H1 (cell line): ENCODE measurements at regions of chr1 and their contacts with region 1.

Region 1: GRCh38 chr1:9399510-9400424 is 107.1 kb downstream of the SPSB1 start:
- DNase-seq: no peak
- H3K4me3 ChIP-seq: no peak overlapping the region
- H3K27ac ChIP-seq: no peak overlapping the region
- H3K4me1 ChIP-seq: peaks cover 0 to 7% (median 2%) of the 10 kb centered on the region in 4 experiments; a peak in 5 of 7 replicates
- H3K27me3 ChIP-seq: no peaks in the 10 kb centered on the region
- CTCF ChIP-seq: no peak
- EP300 ChIP-seq: no peak
- POLR2A ChIP-seq: no peak
- RAD21 ChIP-seq: no peak

Region 2: DNA sequence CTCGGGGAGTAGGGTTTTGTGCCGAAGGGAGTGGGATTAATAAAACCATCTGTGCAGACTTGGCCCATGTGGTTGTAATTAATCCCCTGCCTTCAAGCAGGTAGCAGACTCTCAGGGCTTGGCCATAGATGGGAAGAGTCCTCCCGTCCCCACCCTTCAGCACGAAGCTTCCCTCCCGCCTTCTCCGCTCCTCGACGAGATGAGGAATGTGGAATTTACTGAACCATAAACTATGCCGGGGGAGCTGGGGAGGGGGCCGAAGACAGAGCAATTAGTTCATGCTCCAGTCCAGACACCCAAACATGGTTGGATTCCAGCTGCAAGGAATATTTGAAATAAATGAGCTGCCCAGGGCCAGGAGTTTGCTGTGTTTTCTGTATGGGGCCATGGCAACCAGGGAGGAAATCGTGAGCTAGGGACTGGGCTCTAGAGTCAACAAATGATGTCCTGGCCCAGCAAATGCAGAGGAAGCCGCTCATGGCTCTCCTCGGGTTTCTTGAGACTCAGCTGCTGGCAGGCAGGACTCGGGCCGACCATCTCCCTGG is 28.3 kb before region 1 on chr1:
- CTCF ChIA-PET with region 1: interaction called, 10 read pairs
- POLR2A ChIA-PET with region 1: no interaction called
- DNase-seq: no peak
- H3K4me3 ChIP-seq: no peak overlapping the region
- H3K27ac ChIP-seq: no peak overlapping the region
- H3K4me1 ChIP-seq: no peaks in the 10 kb centered on the region; a peak in 2 of 7 replicates
- H3K27me3 ChIP-seq: no peaks in the 10 kb centered on the region
- CTCF ChIP-seq: no peak
- EP300 ChIP-seq: no peak
- POLR2A ChIP-seq: no peak
- RAD21 ChIP-seq: no peak